A549 (cell line): ENCODE measurements at regions of chr17 and their contacts with region 1.

Region 1: GRCh38 chr17:5249615-5250014 is 15.0 kb upstream of the SCIMP start:
- DNase-seq: peak; percentile 83
- ATAC-seq: peak; percentile 91 to 94
- H3K4me3 ChIP-seq: no peak overlapping the region
- H3K27ac ChIP-seq: no peak overlapping the region
- H3K4me1 ChIP-seq: no peaks in the 10 kb centered on the region
- CTCF ChIP-seq: peak; percentile 81
- EP300 ChIP-seq: no peak
- POLR2A ChIP-seq: no peak
- RAD21 ChIP-seq: peak; percentile 71 to 84

Region 2: GRCh38 chr17:5191541-5192417 is 57.8 kb before region 1 on chr17 and contains the start of gene ZNF594:
- CTCF ChIA-PET with region 1: no interaction called
- POLR2A ChIA-PET with region 1: no interaction called
- DNase-seq: peak; percentile 97 to 98
- ATAC-seq: peak; percentile 100
- H3K4me3 ChIP-seq: peak within 1 kb of the TSS; percentile 63
- H3K27ac ChIP-seq: peak within 1 kb of the TSS; percentile 61 to 87
- H3K4me1 ChIP-seq: no peaks in the 10 kb centered on the region
- CTCF ChIP-seq: peak; percentile 81
- EP300 ChIP-seq: no peak
- POLR2A ChIP-seq: no peak; the same call in 1 of the 2 replicates
- RAD21 ChIP-seq: peak in 1 of 2 experiments; percentile 20; a peak in 1 of 5 replicates
- polyA plus RNA-seq, gene ZNF594: 3.8 and 4.3 TPM in 2 replicates

Region 3: GRCh38 chr17:5264893-5265292 is 15.3 kb after region 1 on chr17:
- CTCF ChIA-PET with region 1: interaction called, 21 read pairs
- POLR2A ChIA-PET with region 1: no interaction called
- DNase-seq: no peak
- ATAC-seq: peak in 1 of 2 experiments; percentile 34; a peak in 3 of 6 replicates
- H3K4me3 ChIP-seq: no peak overlapping the region
- H3K27ac ChIP-seq: no peak overlapping the region
- H3K4me1 ChIP-seq: no peaks in the 10 kb centered on the region
- CTCF ChIP-seq: no peak
- EP300 ChIP-seq: no peak
- POLR2A ChIP-seq: no peak
- RAD21 ChIP-seq: no peak